CD14-positive monocyte (primary cell): ENCODE measurements at regions of chr6 and their contacts with region 1.

Region 1: GRCh38 chr6:170087941-170088581 is 202.8 kb downstream of the DLL1 start:
- DNase-seq: peak; percentile 75 to 84 (median 84)
- H3K4me3 ChIP-seq: peak overlapping the region; percentile 6 to 66 (median 57)
- H3K4me3 Mint-ChIP-seq: peak overlapping the region; percentile 78 to 97
- H3K27ac ChIP-seq: peak overlapping the region in 1 of 2 donors; percentile 74
- H3K27ac Mint-ChIP-seq: peak overlapping the region; percentile 62 to 95 (median 88)
- H3K4me1 ChIP-seq: peaks cover 22% of the 10 kb centered on the region in 2 donors
- H3K4me1 Mint-ChIP-seq: peaks cover 24% of the 10 kb centered on the region
- H3K27me3 ChIP-seq: peaks cover 0 to 30% of the 10 kb centered on the region in 2 donors
- H3K27me3 Mint-ChIP-seq: peaks cover 3 to 12% (median 10%) of the 10 kb centered on the region in 3 donors
- CTCF ChIP-seq: no peak

Region 2: GRCh38 chr6:170006900-170007467 is 81.1 kb before region 1 on chr6:
- intact Hi-C with region 1: loop called in 1 of 2 experiments (anchors 5 kb)
- DNase-seq: no peak
- H3K4me3 ChIP-seq: no peak overlapping the region
- H3K4me3 Mint-ChIP-seq: no peak overlapping the region
- H3K27ac ChIP-seq: no peak overlapping the region
- H3K27ac Mint-ChIP-seq: peak overlapping the region in 1 of 7 donors; percentile 72
- H3K4me1 ChIP-seq: peaks cover 21 to 30% of the 10 kb centered on the region in 2 donors
- H3K4me1 Mint-ChIP-seq: peaks cover 35% of the 10 kb centered on the region
- H3K27me3 ChIP-seq: no peaks in the 10 kb centered on the region
- H3K27me3 Mint-ChIP-seq: peaks cover 6 to 10% (median 8%) of the 10 kb centered on the region in 3 donors
- CTCF ChIP-seq: no peak

Region 3: GRCh38 chr6:170030821-170031471 is 57.1 kb before region 1 on chr6:
- intact Hi-C with region 1: loop called in 1 of 2 experiments (anchors 10 kb)
- DNase-seq: no peak
- H3K4me3 ChIP-seq: no peak overlapping the region
- H3K4me3 Mint-ChIP-seq: no peak overlapping the region
- H3K27ac ChIP-seq: no peak overlapping the region
- H3K27ac Mint-ChIP-seq: peak overlapping the region in 1 of 7 donors; percentile 35
- H3K4me1 ChIP-seq: no peaks in the 10 kb centered on the region
- H3K4me1 Mint-ChIP-seq: peaks cover under 1% of the 10 kb centered on the region
- H3K27me3 ChIP-seq: no peaks in the 10 kb centered on the region
- H3K27me3 Mint-ChIP-seq: peaks cover 3 to 12% (median 5%) of the 10 kb centered on the region in 3 donors
- CTCF ChIP-seq: no peak